Heart right ventricle (tissue), 16 donors: ENCODE measurements at regions of chr15 and their contacts with region 1.

Region 1: GRCh38 chr15:82197733-82198594 is 64.6 kb downstream of the EFL1 start:
- DNase-seq: peak; percentile 31 to 84
- ATAC-seq: peak; percentile 85 to 94 (median 87)
- H3K4me3 ChIP-seq: no peak overlapping the region
- H3K27ac ChIP-seq: no peak overlapping the region
- H3K4me1 ChIP-seq: peaks cover 0 to 32% (median 5%) of the 10 kb centered on the region in 9 donors
- H3K27me3 ChIP-seq: no peaks in the 10 kb centered on the region
- CTCF ChIP-seq: peak; percentile 56 to 85 (median 83)

Region 2: GRCh38 chr15:81410318-81410753 is 787.6 kb before region 1 on chr15:
- intact Hi-C with region 1: loop called in 2 of 10 experiments (anchors 2 to 5 kb)
- DNase-seq: peak; percentile 18 to 29
- ATAC-seq: peak; percentile 61 to 96 (median 84)
- H3K4me3 ChIP-seq: no peak overlapping the region
- H3K27ac ChIP-seq: no peak overlapping the region
- H3K4me1 ChIP-seq: peaks cover 0 to 14% (median 8%) of the 10 kb centered on the region in 9 donors
- H3K27me3 ChIP-seq: no peaks in the 10 kb centered on the region
- CTCF ChIP-seq: peak in 8 of 9 donors; percentile 45 to 67 (median 57)

Region 3: DNA sequence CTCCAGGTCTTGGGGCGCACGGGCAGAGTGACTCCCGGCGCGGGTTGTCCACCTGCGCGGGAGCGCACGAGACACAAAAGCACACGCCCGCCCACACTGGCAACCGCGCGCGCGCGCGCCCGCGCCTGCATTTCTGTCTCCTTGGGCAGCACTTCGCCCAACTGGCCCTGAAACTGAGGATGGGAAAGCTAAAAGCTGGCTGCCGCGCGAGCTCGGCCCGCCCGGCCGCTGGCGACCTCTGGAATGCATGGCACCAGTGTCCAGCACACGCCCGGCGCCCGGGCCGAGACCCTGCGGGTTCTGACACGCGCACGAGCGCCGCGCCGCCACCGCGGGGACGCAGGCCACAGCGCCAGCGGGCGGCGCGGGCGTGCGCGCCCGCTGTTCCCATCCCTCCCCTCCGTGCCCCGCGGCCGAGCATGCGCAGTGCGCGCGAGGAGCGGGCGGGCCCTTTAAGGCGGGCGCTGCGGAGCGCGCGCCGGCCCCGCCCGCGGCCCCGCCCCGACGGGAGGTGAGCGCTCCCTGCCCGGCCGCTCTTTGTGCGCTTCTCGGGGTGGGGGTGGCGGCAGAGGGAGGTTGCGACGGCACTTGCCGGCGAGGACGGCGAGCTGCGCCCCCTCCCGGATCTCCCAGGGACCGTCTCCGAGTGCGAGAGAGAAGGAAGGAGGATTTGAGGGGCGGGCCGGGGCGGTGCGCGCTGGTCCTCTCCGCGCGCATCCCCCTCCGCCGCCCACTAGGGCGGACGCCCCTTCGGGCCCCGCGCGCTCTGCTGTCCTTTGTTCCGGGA is 151.1 kb before region 1 on chr15:
- intact Hi-C with region 1: loop called in 2 of 10 experiments (anchors 5 to 10 kb)
- DNase-seq: peak; percentile 91 to 94
- ATAC-seq: peak; percentile 71 to 91 (median 82)
- H3K4me3 ChIP-seq: peak overlapping the region; percentile 66 to 97 (median 90)
- H3K27ac ChIP-seq: peak overlapping the region; percentile 92 to 99 (median 98)
- H3K4me1 ChIP-seq: peaks cover 3 to 40% (median 28%) of the 10 kb centered on the region in 9 donors
- H3K27me3 ChIP-seq: peaks cover 0 to 28% (median 0%) of the 10 kb centered on the region in 7 donors
- CTCF ChIP-seq: peak; percentile 52 to 84 (median 73)

Region 4: DNA sequence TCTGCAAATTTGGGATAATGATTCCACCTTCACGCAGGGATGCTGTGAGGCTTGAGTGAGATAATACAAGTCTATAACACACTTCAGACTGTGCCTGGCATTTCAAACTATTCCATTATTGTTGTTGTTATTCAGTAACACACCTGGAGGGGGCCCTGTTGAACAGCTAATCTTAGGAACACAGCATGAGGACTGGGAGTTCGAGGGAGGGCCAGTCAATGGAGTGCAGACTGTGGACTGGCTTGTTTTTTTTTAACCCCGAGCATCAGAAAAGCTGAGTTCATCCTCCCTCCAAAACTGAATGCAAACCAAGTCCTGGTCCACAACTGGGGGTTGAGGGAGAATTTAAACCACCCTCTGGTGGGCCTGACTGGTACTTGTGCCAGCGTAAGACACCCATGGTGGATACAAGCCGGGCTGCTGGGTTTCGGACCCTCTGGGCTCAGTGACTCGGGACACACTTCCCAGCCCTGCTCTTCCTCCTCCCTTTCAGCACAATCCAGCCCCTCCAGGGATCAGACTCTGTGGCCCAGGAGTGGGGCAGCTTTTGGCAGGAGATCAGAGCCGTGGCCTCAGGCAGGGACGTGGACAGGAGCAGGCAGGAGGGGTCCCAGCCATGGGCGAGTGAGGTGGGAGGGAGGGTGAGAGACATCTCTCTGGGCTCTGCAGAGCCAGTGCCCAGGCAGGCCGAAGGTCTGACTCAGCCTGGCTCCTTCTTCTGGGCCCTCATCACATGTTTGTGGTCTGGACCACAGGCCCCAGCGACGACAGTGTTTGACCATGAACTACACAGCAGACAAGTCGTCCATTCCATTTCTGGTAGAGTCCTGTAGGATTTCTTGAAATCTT is 115.8 kb before region 1 on chr15:
- intact Hi-C with region 1: no loop called
- DNase-seq: no peak
- ATAC-seq: no peak
- H3K4me3 ChIP-seq: no peak overlapping the region
- H3K27ac ChIP-seq: no peak overlapping the region
- H3K4me1 ChIP-seq: no peaks in the 10 kb centered on the region
- H3K27me3 ChIP-seq: peaks cover 0 to 25% (median 12%) of the 10 kb centered on the region in 7 donors
- CTCF ChIP-seq: no peak

Region 5: DNA sequence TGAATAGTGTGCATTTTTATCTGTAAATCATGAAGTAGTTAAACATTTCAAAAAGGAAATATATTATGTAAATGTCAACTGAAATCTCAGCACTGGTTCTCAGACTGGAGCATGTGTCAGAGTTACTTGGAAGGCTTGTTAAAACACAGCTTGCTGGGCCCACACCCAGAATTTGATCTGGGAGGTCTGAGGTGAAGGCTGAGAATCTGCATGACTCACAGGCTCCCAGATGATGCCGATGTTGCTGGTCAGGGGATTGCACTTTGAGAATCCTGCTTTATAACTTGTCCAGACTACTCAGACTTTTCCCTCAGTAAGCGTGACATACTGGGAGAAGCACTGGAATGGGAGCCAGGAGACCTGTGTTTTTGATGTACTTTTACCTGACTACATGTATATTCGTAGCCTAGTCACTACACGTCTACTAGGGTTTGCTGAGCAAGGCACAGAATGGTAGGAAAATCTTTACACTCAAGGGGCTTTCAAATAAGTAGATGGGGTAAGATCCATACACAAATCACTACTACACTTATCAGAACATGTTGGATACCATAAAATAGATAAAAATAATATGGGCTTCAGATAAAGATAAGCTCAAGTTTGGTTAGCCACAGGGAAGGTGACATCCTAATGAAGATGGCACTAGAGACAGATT is 75.1 kb before region 1 on chr15:
- intact Hi-C with region 1: loop called in 1 of 10 experiments (anchors 5 kb)
- DNase-seq: no peak
- ATAC-seq: no peak
- H3K4me3 ChIP-seq: no peak overlapping the region
- H3K27ac ChIP-seq: no peak overlapping the region
- H3K4me1 ChIP-seq: no peaks in the 10 kb centered on the region
- H3K27me3 ChIP-seq: no peaks in the 10 kb centered on the region
- CTCF ChIP-seq: no peak